Panc1 (cell line): ENCODE measurements at regions of chr14 and their contacts with region 1.

Region 1: GRCh38 chr14:42535397-42535796 is 928.7 kb downstream of the LRFN5 start:
- DNase-seq: no peak
- ATAC-seq: no peak
- H3K4me3 ChIP-seq: peak overlapping the region; percentile 34 to 56
- H3K27ac ChIP-seq: peak overlapping the region; percentile 70; the same call in 1 of the 2 replicates
- H3K4me1 ChIP-seq: no peaks in the 10 kb centered on the region
- H3K27me3 ChIP-seq: no peaks in the 10 kb centered on the region
- CTCF ChIP-seq: peak; percentile 44

Region 2: DNA sequence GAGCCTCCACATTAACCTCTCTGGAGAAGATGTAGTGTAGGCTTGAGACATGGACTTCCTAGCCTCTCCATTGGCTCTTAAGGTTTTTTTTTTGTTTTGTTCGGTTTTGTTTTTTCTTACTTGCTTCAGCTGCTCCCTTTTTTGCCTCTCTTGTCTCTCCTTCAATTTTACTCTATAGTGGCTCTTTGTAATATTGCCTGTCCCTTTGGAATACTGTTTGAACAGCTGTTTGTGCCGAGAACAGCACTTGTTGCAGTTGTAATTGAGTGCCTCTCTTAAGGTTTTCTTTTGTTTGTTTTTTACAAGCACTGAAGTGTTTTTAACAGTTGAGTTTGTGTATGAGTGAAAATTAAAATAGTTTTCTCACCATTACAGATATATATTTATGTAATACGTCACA is 361.0 kb before region 1 on chr14:
- CTCF ChIA-PET with region 1: interaction called, 21 read pairs
- POLR2A ChIA-PET with region 1: no interaction called
- in situ Hi-C with region 1: no loop called
- intact Hi-C with region 1: no loop called
- DNase-seq: no peak
- ATAC-seq: no peak
- H3K4me3 ChIP-seq: no peak overlapping the region
- H3K27ac ChIP-seq: no peak overlapping the region
- H3K4me1 ChIP-seq: no peaks in the 10 kb centered on the region
- H3K27me3 ChIP-seq: no peaks in the 10 kb centered on the region
- CTCF ChIP-seq: no peak